Activated CD4-positive, alpha-beta memory T cell treated with anti-CD3 and anti-CD28 coated beads for 36 hours (primary cell): ENCODE measurements at regions of chr4 and their contacts with region 1.

Region 1: DNA sequence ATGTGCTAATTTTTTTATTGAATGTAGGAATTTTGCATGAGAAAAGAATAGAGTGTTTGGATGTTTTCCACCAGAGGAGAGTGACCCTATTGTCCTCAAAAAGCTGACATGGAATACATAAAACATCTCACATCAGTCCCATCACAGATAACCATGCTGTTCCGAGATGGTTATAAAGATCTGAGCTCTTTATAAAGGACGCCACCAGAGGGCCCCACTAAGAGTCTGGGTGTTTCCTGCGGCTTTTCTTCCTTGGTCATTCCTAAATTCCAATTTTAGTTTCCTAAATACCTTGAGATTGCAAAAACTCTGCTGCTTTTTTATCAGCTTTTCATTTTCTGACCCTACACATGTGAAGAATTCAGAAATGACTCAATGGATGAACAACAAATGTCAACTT is 504.5 kb upstream of the FRG1 start:
- DNase-seq: no peak
- H3K4me3 Mint-ChIP-seq: no peak overlapping the region
- H3K27ac Mint-ChIP-seq: no peak overlapping the region
- H3K4me1 Mint-ChIP-seq: no peaks in the 10 kb centered on the region
- H3K27me3 Mint-ChIP-seq: no peaks in the 10 kb centered on the region

Region 2: DNA sequence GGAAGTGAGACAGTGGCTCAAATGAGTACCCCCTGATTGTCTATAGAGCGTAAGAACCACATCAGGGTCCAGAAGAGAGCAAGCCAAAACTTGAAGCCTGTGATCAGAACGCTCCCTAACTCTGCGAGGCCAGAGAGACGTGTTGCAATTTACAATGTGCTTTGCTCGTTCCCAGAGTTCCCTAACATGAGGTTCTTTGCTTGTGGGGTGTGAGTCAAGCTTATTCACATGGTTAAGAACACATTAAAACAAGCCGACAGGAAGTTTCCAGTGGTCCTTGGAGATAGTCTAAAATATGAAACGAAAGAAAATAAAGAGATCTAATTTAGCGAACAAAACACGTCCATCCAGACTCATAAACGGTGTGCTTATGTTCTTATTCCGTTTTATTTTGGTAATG is 594.7 kb before region 1 on chr4:
- CTCF ChIA-PET with region 1: no interaction called
- POLR2A ChIA-PET with region 1: no interaction called
- intact Hi-C with region 1: no loop called
- DNase-seq: no peak
- H3K4me3 Mint-ChIP-seq: no peak overlapping the region
- H3K27ac Mint-ChIP-seq: no peak overlapping the region
- H3K4me1 Mint-ChIP-seq: no peaks in the 10 kb centered on the region
- H3K27me3 Mint-ChIP-seq: no peaks in the 10 kb centered on the region

Region 3: GRCh38 chr4:189092581-189092980 is 343.6 kb before region 1 on chr4:
- CTCF ChIA-PET with region 1: no interaction called
- POLR2A ChIA-PET with region 1: no interaction called
- intact Hi-C with region 1: no loop called
- DNase-seq: no peak
- H3K4me3 Mint-ChIP-seq: no peak overlapping the region
- H3K27ac Mint-ChIP-seq: no peak overlapping the region
- H3K4me1 Mint-ChIP-seq: no peaks in the 10 kb centered on the region
- H3K27me3 Mint-ChIP-seq: no peaks in the 10 kb centered on the region

Region 4: DNA sequence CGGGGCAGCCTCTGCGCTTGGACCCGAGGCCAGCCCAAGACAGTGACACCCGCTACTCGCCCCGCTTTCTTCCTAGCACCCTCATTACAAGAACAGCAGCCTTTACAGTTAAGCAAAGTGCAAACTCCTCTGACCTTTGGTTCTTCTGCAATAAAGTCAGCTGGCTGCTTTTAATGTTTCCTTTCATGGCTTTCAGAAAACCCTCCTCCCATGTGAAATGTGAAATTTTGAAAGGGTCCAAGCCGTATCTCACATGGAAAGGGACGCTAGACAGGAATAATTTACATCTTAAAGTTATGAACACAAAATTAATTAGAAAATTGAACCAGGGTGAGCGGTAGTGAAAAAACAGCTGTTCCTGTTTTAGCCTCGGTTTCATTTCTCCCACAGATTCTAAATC is 15.6 kb before region 1 on chr4:
- CTCF ChIA-PET with region 1: no interaction called
- POLR2A ChIA-PET with region 1: no interaction called
- intact Hi-C with region 1: no loop called
- DNase-seq: no peak
- H3K4me3 Mint-ChIP-seq: no peak overlapping the region
- H3K27ac Mint-ChIP-seq: no peak overlapping the region
- H3K4me1 Mint-ChIP-seq: no peaks in the 10 kb centered on the region
- H3K27me3 Mint-ChIP-seq: no peaks in the 10 kb centered on the region

Region 5: GRCh38 chr4:189792924-189793618 is 356.9 kb after region 1 on chr4:
- CTCF ChIA-PET with region 1: no interaction called
- POLR2A ChIA-PET with region 1: no interaction called
- intact Hi-C with region 1: loop called (anchors 10 kb)
- DNase-seq: peak; percentile 76
- H3K4me3 Mint-ChIP-seq: no peak overlapping the region
- H3K27ac Mint-ChIP-seq: no peak overlapping the region
- H3K4me1 Mint-ChIP-seq: peaks cover 3% of the 10 kb centered on the region
- H3K27me3 Mint-ChIP-seq: peaks cover 10% of the 10 kb centered on the region